Naive thymus-derived CD8-positive, alpha-beta T cell (primary cell): ENCODE measurements at regions of chr10 and their contacts with region 1.

Region 1: GRCh38 chr10:87817609-87818504 is at the start of gene ATAD1:
- DNase-seq: peak; percentile 82 to 93 (median 88)
- ATAC-seq: peak; percentile 85 to 86
- H3K4me3 Mint-ChIP-seq: peak within 1 kb of the TSS; percentile 87 to 99 (median 96)
- H3K27ac Mint-ChIP-seq: peak within 1 kb of the TSS; percentile 96 to 99 (median 98)
- H3K4me1 Mint-ChIP-seq: peaks cover 16 to 40% (median 33%) of the 10 kb centered on the region in 4 donors
- H3K27me3 Mint-ChIP-seq: no peaks in the 10 kb centered on the region
- polyA plus RNA-seq, gene ATAD1: 32.4 to 39.0 (median 35.9) TPM

Region 2: DNA sequence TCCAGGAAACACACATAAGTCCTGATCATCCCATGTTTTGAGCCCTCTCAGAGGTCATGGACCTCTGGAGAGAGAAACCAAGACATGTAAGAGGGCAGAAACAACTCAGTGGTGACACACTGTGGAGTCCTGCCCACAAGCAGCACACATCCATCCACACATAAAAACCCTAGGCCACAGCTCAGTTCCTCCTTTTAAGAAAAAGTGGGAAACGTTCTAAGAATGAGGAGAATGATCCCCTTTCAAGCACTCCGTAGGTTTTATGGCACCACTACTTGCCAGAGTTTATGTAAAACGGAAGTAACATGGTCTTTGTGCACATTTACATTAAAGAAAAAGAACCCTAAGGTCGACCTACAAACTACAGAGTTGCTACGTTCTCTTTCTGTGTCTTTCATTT is 19.8 kb before region 1 on chr10:
- POLR2A ChIA-PET with region 1: interaction called, 10 read pairs
- DNase-seq: peak in 2 of 10 donors; percentile 6 to 8
- ATAC-seq: peak in 1 of 2 donors; percentile 32
- H3K4me3 Mint-ChIP-seq: peak overlapping the region in 9 of 10 donors; percentile 37 to 75 (median 62)
- H3K27ac Mint-ChIP-seq: peak overlapping the region in 9 of 10 donors; percentile 35 to 87 (median 78)
- H3K4me1 Mint-ChIP-seq: peaks cover 20 to 62% (median 60%) of the 10 kb centered on the region in 4 donors
- H3K27me3 Mint-ChIP-seq: no peaks in the 10 kb centered on the region

Region 3: DNA sequence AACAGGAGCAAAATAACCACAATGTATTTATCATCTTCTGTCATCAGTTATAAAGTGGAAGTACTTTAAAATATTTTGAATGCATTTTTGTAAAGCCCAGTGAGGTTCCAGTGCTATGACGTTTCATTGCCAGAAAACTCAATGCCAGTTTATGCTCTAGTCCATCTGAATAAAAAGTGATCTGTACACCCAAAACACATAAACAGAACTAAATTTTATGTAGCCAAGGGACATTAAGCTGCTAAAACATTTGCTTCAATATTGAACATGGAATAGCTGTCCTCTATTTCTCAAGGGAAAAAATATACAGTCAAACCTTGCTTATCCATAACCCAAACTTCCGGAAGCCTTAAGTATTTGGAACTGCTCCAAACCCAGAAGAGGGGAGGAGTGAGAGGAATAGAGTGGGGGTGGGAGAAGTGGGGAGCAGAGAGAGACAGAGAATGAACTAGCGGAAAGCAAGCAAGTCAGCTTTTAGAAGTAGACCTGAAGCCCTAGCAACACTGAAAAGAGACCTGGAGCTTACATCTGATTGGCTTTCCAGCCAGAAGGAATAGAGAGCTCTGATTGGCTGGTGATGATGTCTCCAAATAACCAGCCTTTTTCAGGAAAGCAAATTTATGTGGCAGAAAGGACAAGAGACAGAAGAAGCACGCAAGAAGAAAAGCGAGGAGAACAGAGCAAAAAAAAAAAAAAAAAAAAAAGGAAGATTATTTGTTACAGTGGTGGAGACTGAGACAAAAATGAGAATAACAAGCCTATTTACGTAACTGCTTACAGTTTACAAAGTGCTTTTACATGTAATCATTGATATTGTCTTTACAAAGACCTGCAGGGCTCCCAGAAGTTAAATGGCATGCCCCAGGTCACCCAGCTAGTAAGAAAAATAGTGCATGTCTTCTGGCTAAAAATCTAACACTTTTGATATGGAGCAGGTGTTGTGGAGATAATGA is 569.2 kb after region 1 on chr10:
- POLR2A ChIA-PET with region 1: interaction called, 10 read pairs
- DNase-seq: peak in 8 of 10 donors; percentile 2 to 65 (median 35)
- ATAC-seq: peak; percentile 40 to 51
- H3K4me3 Mint-ChIP-seq: no peak overlapping the region
- H3K27ac Mint-ChIP-seq: no peak overlapping the region
- H3K4me1 Mint-ChIP-seq: peaks cover 14 to 31% (median 25%) of the 10 kb centered on the region in 4 donors
- H3K27me3 Mint-ChIP-seq: no peaks in the 10 kb centered on the region